Activated CD4-positive, alpha-beta memory T cell treated with anti-CD3 and anti-CD28 coated beads for 36 hours (primary cell): ENCODE measurements at regions of chr15 and their contacts with region 1.

Region 1: GRCh38 chr15:60520825-60521368 is 42.0 kb upstream of the ICE2 start:
- DNase-seq: peak; percentile 88
- H3K4me3 Mint-ChIP-seq: peak overlapping the region; percentile 20
- H3K27ac Mint-ChIP-seq: peak overlapping the region; percentile 56
- H3K4me1 Mint-ChIP-seq: peaks cover 60% of the 10 kb centered on the region
- H3K27me3 Mint-ChIP-seq: no peaks in the 10 kb centered on the region

Region 2: GRCh38 chr15:60326824-60327654 is 193.9 kb before region 1 on chr15:
- CTCF ChIA-PET with region 1: interaction called, 17 read pairs
- POLR2A ChIA-PET with region 1: no interaction called
- intact Hi-C with region 1: no loop called
- DNase-seq: peak; percentile 23
- H3K4me3 Mint-ChIP-seq: no peak overlapping the region
- H3K27ac Mint-ChIP-seq: no peak overlapping the region
- H3K4me1 Mint-ChIP-seq: peaks cover 2% of the 10 kb centered on the region
- H3K27me3 Mint-ChIP-seq: peaks cover 35% of the 10 kb centered on the region

Region 3: GRCh38 chr15:60478566-60479360 is 42.1 kb before region 1 on chr15 and contains the start of gene ICE2:
- CTCF ChIA-PET with region 1: interaction called, 8 read pairs
- POLR2A ChIA-PET with region 1: no interaction called
- intact Hi-C with region 1: loop called (anchors 1 kb)
- DNase-seq: peak; percentile 98
- H3K4me3 Mint-ChIP-seq: peak within 1 kb of the TSS; percentile 99
- H3K27ac Mint-ChIP-seq: peak within 1 kb of the TSS; percentile 98
- H3K4me1 Mint-ChIP-seq: peaks cover 55% of the 10 kb centered on the region
- H3K27me3 Mint-ChIP-seq: no peaks in the 10 kb centered on the region
- total RNA-seq, gene ICE2: 66.0 to 71.3 TPM

Region 4: DNA sequence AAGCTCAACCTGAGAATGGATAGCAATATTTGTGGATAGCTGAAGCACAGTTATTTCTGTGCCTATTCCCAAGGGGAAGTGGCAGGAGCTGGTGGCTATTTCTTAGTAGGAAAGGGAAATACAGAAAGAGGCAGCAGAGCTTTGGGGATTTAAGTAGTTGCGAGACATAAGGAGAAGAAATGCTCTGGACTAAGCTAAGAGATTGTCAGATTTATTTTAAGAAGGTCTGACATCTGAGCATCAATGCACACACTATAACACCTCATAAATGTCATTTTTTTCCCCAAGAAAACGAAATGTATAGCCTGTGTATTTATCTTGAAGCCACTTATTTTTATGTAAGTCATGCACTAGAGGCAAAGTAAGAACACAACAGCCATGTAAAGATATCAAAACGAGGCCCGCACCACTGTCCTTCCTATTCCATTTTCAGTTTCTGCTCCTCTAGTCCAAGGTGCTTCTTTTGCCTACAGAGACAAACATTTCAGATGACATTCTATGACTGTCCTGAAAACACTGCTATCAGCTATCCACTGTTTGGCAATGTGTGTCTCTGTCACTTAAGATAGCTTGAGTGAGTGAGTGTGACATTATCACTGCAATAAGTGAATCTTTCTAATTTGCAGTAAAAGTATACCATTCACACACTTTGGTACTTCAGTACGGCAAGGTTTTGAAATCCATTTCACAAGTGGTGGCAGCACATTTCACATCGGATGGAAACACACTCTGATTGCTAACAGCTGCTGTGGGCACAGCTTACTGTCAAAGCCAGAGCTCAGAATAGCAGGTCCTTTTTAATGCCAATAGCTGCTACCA is 20.8 kb after region 1 on chr15:
- CTCF ChIA-PET with region 1: interaction called, 82 read pairs
- POLR2A ChIA-PET with region 1: interaction called, 9 read pairs
- intact Hi-C with region 1: loop called (anchors 2 kb)
- DNase-seq: no peak
- H3K4me3 Mint-ChIP-seq: peak overlapping the region; percentile 4
- H3K27ac Mint-ChIP-seq: peak overlapping the region; percentile 83
- H3K4me1 Mint-ChIP-seq: peaks cover 95% of the 10 kb centered on the region
- H3K27me3 Mint-ChIP-seq: no peaks in the 10 kb centered on the region

Region 5: GRCh38 chr15:60580650-60581376 is 59.9 kb after region 1 on chr15:
- CTCF ChIA-PET with region 1: interaction called, 15 read pairs
- POLR2A ChIA-PET with region 1: interaction called, 3 read pairs
- intact Hi-C with region 1: loop called (anchors 5 kb)
- DNase-seq: peak; percentile 66
- H3K4me3 Mint-ChIP-seq: peak overlapping the region; percentile 70
- H3K27ac Mint-ChIP-seq: peak overlapping the region; percentile 91
- H3K4me1 Mint-ChIP-seq: peaks cover 91% of the 10 kb centered on the region
- H3K27me3 Mint-ChIP-seq: no peaks in the 10 kb centered on the region

Region 6: GRCh38 chr15:60620708-60621107 is 99.8 kb after region 1 on chr15:
- CTCF ChIA-PET with region 1: no interaction called
- POLR2A ChIA-PET with region 1: no interaction called
- intact Hi-C with region 1: no loop called
- DNase-seq: no peak
- H3K4me3 Mint-ChIP-seq: no peak overlapping the region
- H3K27ac Mint-ChIP-seq: no peak overlapping the region
- H3K4me1 Mint-ChIP-seq: no peaks in the 10 kb centered on the region
- H3K27me3 Mint-ChIP-seq: no peaks in the 10 kb centered on the region